MCF 10A (cell line): ENCODE measurements at regions of chr7 and their contacts with region 1.

Region 1: GRCh38 chr7:55018361-55019190 is at the start of gene EGFR:
- DNase-seq: peak; percentile 80
- H3K4me3 Mint-ChIP-seq: peak within 1 kb of the TSS; percentile 86
- H3K27ac Mint-ChIP-seq: peak within 1 kb of the TSS; percentile 93
- H3K4me1 Mint-ChIP-seq: no peaks in the 10 kb centered on the region
- H3K27me3 Mint-ChIP-seq: no peaks in the 10 kb centered on the region
- CTCF ChIP-seq: no peak
- total RNA-seq, gene EGFR: 371 and 448 TPM in 2 replicates

Region 2: GRCh38 chr7:54831644-54832099 is 186.9 kb before region 1 on chr7:
- CTCF ChIA-PET with region 1: interaction called, 6 read pairs
- POLR2A ChIA-PET with region 1: interaction called, 41 read pairs
- intact Hi-C with region 1: no loop called
- DNase-seq: peak; percentile 96
- H3K4me3 Mint-ChIP-seq: peak overlapping the region; percentile 28
- H3K27ac Mint-ChIP-seq: peak overlapping the region; percentile 61
- H3K4me1 Mint-ChIP-seq: peaks cover 21% of the 10 kb centered on the region
- H3K27me3 Mint-ChIP-seq: no peaks in the 10 kb centered on the region
- CTCF ChIP-seq: no peak

Region 3: GRCh38 chr7:54944179-54944578 is 74.4 kb before region 1 on chr7:
- CTCF ChIA-PET with region 1: interaction called, 4 read pairs
- POLR2A ChIA-PET with region 1: interaction called, 126 read pairs
- intact Hi-C with region 1: no loop called
- DNase-seq: peak; percentile 21
- H3K4me3 Mint-ChIP-seq: no peak overlapping the region
- H3K27ac Mint-ChIP-seq: peak overlapping the region; percentile 4
- H3K4me1 Mint-ChIP-seq: peaks cover 24% of the 10 kb centered on the region
- H3K27me3 Mint-ChIP-seq: no peaks in the 10 kb centered on the region
- CTCF ChIP-seq: no peak

Region 4: DNA sequence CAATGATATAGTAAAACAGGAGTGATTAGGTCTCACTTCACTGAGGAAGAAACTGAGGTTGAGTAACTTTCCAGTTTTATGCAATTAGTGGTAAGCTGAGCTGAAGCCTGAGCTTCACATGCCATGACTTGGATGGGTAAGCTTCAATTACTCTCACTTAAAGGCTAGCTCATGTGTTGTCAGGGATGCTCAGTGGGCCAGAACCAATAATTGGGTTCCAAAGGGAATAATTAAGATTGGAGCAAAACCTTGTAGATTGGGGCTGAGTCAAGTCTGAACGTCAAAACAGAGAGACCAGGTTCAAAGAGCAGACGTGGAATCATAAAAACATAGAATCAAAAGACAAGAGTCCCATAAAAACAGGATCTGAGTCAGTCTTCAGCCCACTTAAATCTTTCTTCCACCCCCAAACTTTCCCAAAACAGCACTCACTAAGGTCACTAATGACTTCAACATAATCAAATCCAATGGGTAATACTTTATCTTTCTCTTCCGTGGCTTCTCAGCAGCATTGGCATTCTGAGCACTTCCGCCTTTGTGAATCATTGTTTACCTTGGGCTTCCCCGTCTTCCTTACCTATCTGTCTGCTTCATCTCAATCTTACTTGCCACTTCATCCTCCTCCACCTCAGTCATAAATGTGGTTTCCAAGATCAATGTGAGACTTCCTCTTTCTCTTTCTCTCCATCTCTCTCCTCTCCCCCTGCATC is 22.8 kb before region 1 on chr7:
- CTCF ChIA-PET with region 1: interaction called, 7 read pairs
- POLR2A ChIA-PET with region 1: interaction called, 75 read pairs
- intact Hi-C with region 1: loop called (anchors 2 kb)
- DNase-seq: peak; percentile 73
- H3K4me3 Mint-ChIP-seq: peak overlapping the region; percentile 11
- H3K27ac Mint-ChIP-seq: peak overlapping the region; percentile 90
- H3K4me1 Mint-ChIP-seq: peaks cover 22% of the 10 kb centered on the region
- H3K27me3 Mint-ChIP-seq: no peaks in the 10 kb centered on the region
- CTCF ChIP-seq: no peak

Region 5: DNA sequence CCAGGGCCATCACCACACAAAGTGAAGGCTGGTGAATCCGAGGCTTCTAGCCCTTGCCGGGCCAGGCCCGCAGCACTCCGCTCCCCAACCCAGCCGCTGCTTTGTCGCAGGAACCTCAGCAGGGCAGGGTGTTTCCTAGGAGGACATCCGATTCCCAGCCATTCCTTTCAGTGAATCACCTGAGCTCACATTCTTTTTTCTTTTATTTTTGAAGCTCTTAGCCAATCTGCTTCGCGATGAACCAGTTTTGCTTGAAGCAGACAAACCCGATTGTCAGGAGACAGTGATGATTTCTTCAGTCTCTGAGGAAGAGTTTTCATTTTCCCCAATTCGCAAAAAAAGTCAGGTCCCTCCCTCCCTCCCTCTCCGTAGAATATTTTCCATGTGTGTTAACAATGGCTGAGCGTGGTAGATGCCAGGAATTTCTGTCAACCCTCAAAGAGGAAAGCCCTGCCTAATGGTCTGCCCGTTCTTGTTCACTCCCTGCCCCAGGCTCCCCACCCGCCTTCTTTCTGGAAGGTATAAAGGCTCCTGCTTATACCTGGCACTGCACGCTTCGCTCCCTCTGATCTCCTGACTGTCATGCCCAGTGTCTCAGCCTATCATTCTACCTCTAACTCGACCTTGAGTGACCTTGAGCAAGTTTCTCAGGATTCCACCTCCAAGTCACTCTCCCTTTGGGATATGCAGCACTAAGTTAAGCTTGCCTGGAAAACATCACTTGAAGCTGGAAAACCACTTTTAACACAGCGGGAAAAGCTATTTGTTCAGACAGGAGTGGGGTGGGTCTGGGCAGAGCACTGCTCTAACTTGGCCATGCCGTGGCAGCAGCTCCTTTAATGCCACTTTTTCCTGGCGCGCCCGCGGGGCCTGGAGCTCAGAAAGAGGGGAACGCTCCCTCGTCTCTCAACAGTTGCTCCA is 35.3 kb after region 1 on chr7:
- CTCF ChIA-PET with region 1: interaction called, 6 read pairs
- POLR2A ChIA-PET with region 1: interaction called, 122 read pairs
- intact Hi-C with region 1: no loop called
- DNase-seq: peak; percentile 57
- H3K4me3 Mint-ChIP-seq: peak overlapping the region; percentile 58
- H3K27ac Mint-ChIP-seq: peak overlapping the region; percentile 95
- H3K4me1 Mint-ChIP-seq: peaks cover 80% of the 10 kb centered on the region
- H3K27me3 Mint-ChIP-seq: no peaks in the 10 kb centered on the region
- CTCF ChIP-seq: no peak

Region 6: GRCh38 chr7:55110661-55111361 is 92.2 kb after region 1 on chr7:
- CTCF ChIA-PET with region 1: interaction called, 3 read pairs
- POLR2A ChIA-PET with region 1: interaction called, 11 read pairs
- intact Hi-C with region 1: no loop called
- DNase-seq: no peak
- H3K4me3 Mint-ChIP-seq: peak overlapping the region; percentile 21
- H3K27ac Mint-ChIP-seq: peak overlapping the region; percentile 84
- H3K4me1 Mint-ChIP-seq: peaks cover 55% of the 10 kb centered on the region
- H3K27me3 Mint-ChIP-seq: no peaks in the 10 kb centered on the region
- CTCF ChIP-seq: no peak